Heart left ventricle (tissue), 16 donors: ENCODE measurements at regions of chr5 and their contacts with region 1.

Region 1: DNA sequence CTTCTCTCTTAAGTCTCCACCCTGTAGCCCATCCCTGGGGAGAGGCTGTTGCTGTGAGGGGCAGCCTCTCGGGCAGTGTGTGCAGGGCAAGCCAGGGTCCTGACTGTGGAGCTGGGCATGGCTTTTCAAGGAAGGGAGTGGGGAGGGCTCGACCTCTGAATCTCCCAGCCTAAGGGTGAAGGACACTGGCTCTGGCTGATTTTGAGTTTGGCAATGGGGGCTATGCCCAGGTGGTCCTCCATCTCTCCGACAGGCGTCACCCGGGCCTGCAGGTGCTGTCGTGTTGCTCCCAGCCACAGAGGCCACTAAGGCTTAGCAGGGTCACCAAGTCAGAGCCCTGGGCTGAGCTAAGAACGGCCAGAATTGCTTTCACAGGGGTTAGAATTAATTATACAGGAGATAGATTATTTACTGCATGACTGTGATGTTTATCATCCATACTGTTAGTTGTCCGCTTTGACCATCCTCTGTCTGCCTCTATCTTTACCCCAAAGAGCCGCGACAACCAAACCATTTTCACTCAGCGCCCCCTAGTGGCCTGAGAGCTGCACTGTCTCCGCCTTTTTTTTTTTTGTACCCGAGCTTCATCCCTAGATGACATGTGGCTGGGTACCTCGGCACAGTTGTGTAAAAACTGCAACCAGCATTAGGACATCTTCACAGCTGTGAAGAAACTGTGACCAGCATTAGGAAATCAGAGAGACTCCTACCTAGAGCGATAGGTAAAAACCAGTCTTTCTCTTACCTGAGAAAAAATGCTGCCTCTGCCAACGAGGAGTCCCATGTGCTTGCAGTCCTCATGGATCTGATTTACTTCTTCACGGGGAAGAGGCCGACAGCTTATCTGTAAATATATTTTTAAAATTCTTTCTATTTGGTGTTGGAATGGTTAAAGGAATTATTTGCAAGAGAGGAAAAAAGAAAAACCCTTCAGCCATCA is 44.5 kb downstream of the AGXT2 start:
- DNase-seq: peak in 4 of 5 donors; percentile 28 to 49 (median 36)
- ATAC-seq: peak in 3 of 4 donors; percentile 50 to 66 (median 55)
- H3K4me3 ChIP-seq: no peak overlapping the region
- H3K27ac ChIP-seq: no peak overlapping the region
- H3K4me1 ChIP-seq: no peaks in the 10 kb centered on the region
- H3K27me3 ChIP-seq: peaks cover 0 to 19% (median 6%) of the 10 kb centered on the region in 9 donors
- CTCF ChIP-seq: peak; percentile 72 to 91 (median 82)
- POLR2A ChIP-seq: no peak

Region 2: GRCh38 chr5:34474573-34475021 is 528.7 kb before region 1 on chr5:
- intact Hi-C with region 1: loop called in 4 of 10 experiments (anchors 5 to 10 kb)
- DNase-seq: no peak
- ATAC-seq: peak in 3 of 4 donors; percentile 45 to 70 (median 62)
- H3K4me3 ChIP-seq: no peak overlapping the region
- H3K27ac ChIP-seq: no peak overlapping the region
- H3K4me1 ChIP-seq: no peaks in the 10 kb centered on the region
- H3K27me3 ChIP-seq: peaks cover 0 to 6% (median 0%) of the 10 kb centered on the region in 9 donors
- CTCF ChIP-seq: peak; percentile 88 to 97 (median 92)
- POLR2A ChIP-seq: no peak

Region 3: DNA sequence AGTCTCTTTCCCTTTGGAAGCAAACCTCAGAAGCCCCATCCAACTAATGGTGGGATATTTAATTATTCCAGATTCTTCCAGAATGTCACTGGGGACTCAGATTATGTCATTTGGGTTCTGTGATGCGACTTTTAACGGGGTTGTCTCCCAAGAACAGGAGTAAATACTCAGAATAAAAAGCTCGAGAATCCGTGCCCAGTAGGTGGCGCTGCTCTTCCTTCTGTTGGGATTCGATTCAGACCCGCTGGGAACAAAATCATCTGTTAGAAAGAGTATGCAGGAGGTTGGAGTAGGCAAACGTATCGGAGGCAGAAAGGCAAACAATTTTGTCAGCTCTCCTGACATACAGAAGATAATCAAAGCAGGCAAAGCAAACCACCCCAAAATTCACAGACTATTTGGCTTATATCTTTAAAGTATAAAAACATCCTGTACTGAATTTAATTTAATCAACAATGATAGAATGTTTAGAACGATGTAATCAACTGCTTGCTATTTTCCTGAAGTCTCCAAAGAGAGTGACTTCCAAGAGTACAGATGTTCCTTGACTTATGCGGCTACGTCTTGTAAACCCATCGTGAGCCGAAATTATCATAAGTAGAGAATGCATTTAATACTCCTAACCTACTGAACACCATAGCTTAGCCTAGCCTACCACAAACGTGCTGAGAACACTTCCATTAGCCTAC is 517.0 kb before region 1 on chr5:
- intact Hi-C with region 1: loop called in 4 of 10 experiments (anchors 5 to 10 kb)
- DNase-seq: peak; percentile 65 to 85 (median 76)
- ATAC-seq: peak; percentile 45 to 88 (median 70)
- H3K4me3 ChIP-seq: no peak overlapping the region
- H3K27ac ChIP-seq: peak overlapping the region in 1 of 12 donors; percentile 36
- H3K4me1 ChIP-seq: peaks cover 0 to 11% (median 1%) of the 10 kb centered on the region in 12 donors
- H3K27me3 ChIP-seq: peaks cover 0 to 4% (median 0%) of the 10 kb centered on the region in 9 donors
- CTCF ChIP-seq: peak; percentile 74 to 92 (median 85)
- POLR2A ChIP-seq: no peak

Region 4: GRCh38 chr5:34957857-34958690 is 45.2 kb before region 1 on chr5:
- intact Hi-C with region 1: loop called in 1 of 10 experiments (anchors 5 kb)
- DNase-seq: no peak
- ATAC-seq: peak in 3 of 4 donors; percentile 62 to 73 (median 65)
- H3K4me3 ChIP-seq: no peak overlapping the region
- H3K27ac ChIP-seq: no peak overlapping the region
- H3K4me1 ChIP-seq: no peaks in the 10 kb centered on the region
- H3K27me3 ChIP-seq: no peaks in the 10 kb centered on the region
- CTCF ChIP-seq: peak; percentile 19 to 60 (median 43)
- POLR2A ChIP-seq: no peak